Activated T-helper 1 cell treated with anti-CD3 and anti-CD28 coated beads, Interleukin-12 subunit alpha, Interleukin-12 subunit beta, Interleukin-2, Interleukin-4 antibody, amounts not matched to agents 30 ng/mL and 10 ng/mL and 1 ng/mL, durations not matched to agents 14 hours and 24 hours and 36 hours (primary cell): ENCODE measurements at regions of chr2 and their contacts with region 1.

Region 1: GRCh38 chr2:102336502-102336945 is 19.1 kb upstream of the IL18R1 start:
- DNase-seq: no peak
- H3K4me3 Mint-ChIP-seq: no peak overlapping the region
- H3K27ac Mint-ChIP-seq: no peak overlapping the region
- H3K4me1 Mint-ChIP-seq: peaks cover 21% of the 10 kb centered on the region
- H3K27me3 Mint-ChIP-seq: no peaks in the 10 kb centered on the region

Region 2: GRCh38 chr2:102313025-102313424 is 23.5 kb before region 1 on chr2:
- intact Hi-C with region 1: loop called (anchors 2 kb)
- DNase-seq: no peak
- H3K4me3 Mint-ChIP-seq: no peak overlapping the region
- H3K27ac Mint-ChIP-seq: no peak overlapping the region
- H3K4me1 Mint-ChIP-seq: peaks cover 30% of the 10 kb centered on the region
- H3K27me3 Mint-ChIP-seq: no peaks in the 10 kb centered on the region